Left lung (tissue), 14 donors: ENCODE measurements at regions of chr20 and their contacts with region 1.

Region 1: GRCh38 chr20:38073307-38074071 is 39.9 kb downstream of the RPRD1B start:
- DNase-seq: peak in 3 of 4 donors; percentile 46 to 93 (median 91)
- ATAC-seq: peak; percentile 93
- H3K4me3 ChIP-seq: no peak overlapping the region
- H3K27ac ChIP-seq: peak overlapping the region; percentile 4 to 55
- H3K4me1 ChIP-seq: peaks cover 10 to 14% of the 10 kb centered on the region in 2 donors
- H3K27me3 ChIP-seq: no peaks in the 10 kb centered on the region
- CTCF ChIP-seq: peak; percentile 64 to 71

Region 2: DNA sequence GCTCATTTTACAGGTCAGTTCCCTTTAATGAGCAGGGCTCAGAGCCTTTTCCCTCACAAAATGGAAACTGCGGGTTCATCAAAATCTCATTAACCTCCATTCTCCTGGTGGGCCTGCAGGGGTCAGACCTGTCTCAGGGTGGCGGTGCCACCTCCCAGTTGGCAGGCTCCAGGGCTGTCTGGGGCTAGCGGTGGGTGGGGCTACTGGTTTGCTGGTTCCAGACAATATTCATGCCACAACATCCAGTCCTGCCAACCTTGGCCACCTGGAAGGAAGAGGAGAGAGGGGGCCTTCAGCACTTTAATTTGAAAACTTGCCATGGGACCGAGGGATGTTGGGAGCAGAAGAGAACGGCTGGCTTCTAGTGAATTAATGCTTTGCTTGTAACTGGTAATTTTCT is 421.6 kb before region 1 on chr20:
- intact Hi-C with region 1: no loop called
- DNase-seq: peak in 2 of 4 donors; percentile 17 to 53
- ATAC-seq: peak; percentile 97
- H3K4me3 ChIP-seq: no peak overlapping the region
- H3K27ac ChIP-seq: no peak overlapping the region
- H3K4me1 ChIP-seq: no peaks in the 10 kb centered on the region
- H3K27me3 ChIP-seq: no peaks in the 10 kb centered on the region
- CTCF ChIP-seq: peak; percentile 14 to 25

Region 3: GRCh38 chr20:38165089-38165989 is 91.8 kb after region 1 on chr20 and contains the start of gene TGM2:
- intact Hi-C with region 1: loop called in 1 of 2 experiments (anchors 5 kb)
- DNase-seq: peak; percentile 68 to 96 (median 85)
- ATAC-seq: peak; percentile 93
- H3K4me3 ChIP-seq: peak within 1 kb of the TSS; percentile 43 to 55
- H3K27ac ChIP-seq: peak within 1 kb of the TSS; percentile 33 to 46
- H3K4me1 ChIP-seq: peaks cover 15 to 65% of the 10 kb centered on the region in 2 donors
- H3K27me3 ChIP-seq: no peaks in the 10 kb centered on the region
- CTCF ChIP-seq: peak; percentile 85 to 87
- polyA plus RNA-seq, gene TGM2: 89.0 to 127 (median 96.9) TPM

Region 4: GRCh38 chr20:38304845-38305447 is 231.5 kb after region 1 on chr20:
- intact Hi-C with region 1: no loop called
- DNase-seq: peak in 2 of 4 donors; percentile 62 to 85
- ATAC-seq: peak; percentile 60
- H3K4me3 ChIP-seq: no peak overlapping the region
- H3K27ac ChIP-seq: peak overlapping the region in 1 of 2 donors; percentile 51
- H3K4me1 ChIP-seq: peaks cover 0 to 50% of the 10 kb centered on the region in 2 donors
- H3K27me3 ChIP-seq: peaks cover 0 to 58% of the 10 kb centered on the region in 2 donors
- CTCF ChIP-seq: peak in 1 of 2 donors; percentile 54

Region 5: GRCh38 chr20:38501861-38502436 is 428.5 kb after region 1 on chr20:
- intact Hi-C with region 1: no loop called
- DNase-seq: no peak
- ATAC-seq: no peak
- H3K4me3 ChIP-seq: no peak overlapping the region
- H3K27ac ChIP-seq: no peak overlapping the region
- H3K4me1 ChIP-seq: no peaks in the 10 kb centered on the region
- H3K27me3 ChIP-seq: no peaks in the 10 kb centered on the region
- CTCF ChIP-seq: no peak